Left colon (tissue), 2 donors: ENCODE measurements at regions of chr5 and their contacts with region 1.

Region 1: GRCh38 chr5:36944607-36945225 is 68.1 kb downstream of the NIPBL start:
- DNase-seq: no peak
- ATAC-seq: no peak

Region 2: DNA sequence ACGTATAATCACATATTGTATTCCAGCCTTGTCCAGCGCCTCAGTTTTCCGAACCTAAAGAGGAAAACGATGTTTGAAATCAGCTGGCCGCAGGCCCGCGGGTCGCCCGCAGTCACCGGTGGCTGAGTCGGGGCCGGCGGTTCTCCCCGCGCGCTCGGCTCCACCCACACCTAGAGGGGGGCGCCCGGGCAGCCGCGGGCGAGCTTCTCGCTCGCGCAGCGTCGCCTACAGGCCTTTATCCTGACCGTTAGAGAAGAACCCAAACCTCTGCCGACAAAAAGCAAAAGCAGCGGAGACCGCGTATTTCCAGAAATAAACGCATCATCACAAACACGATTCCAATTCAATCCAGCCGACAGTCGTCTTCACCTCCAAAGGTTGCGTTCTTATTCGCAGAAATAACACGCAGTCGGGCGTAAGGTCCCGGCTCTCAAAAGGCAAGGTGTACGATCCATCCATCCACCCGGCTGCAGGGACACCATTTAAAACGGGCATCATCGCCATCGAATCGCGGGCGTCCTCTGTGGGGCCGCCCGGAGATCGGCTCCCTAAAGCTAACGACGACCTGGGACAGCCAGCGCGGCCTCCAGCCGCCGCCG is 68.8 kb before region 1 on chr5:
- intact Hi-C with region 1: loop called in 1 of 2 experiments (anchors 5 kb)
- DNase-seq: peak; percentile 78 to 87
- ATAC-seq: peak; percentile 74